CD4-positive, alpha-beta T cell (primary cell): ENCODE measurements at regions of chr1 and their contacts with region 1.

Region 1: GRCh38 chr1:182761396-182762395 is 27.9 kb upstream of the NPL start:
- DNase-seq: no peak
- ATAC-seq: no peak
- H3K4me3 ChIP-seq: no peak overlapping the region
- H3K4me3 Mint-ChIP-seq: no peak overlapping the region
- H3K27ac ChIP-seq: no peak overlapping the region
- H3K27ac Mint-ChIP-seq: no peak overlapping the region
- H3K4me1 ChIP-seq: no peaks in the 10 kb centered on the region
- H3K4me1 Mint-ChIP-seq: no peaks in the 10 kb centered on the region
- H3K27me3 ChIP-seq: peaks cover 0 to 2% of the 10 kb centered on the region in 2 experiments
- H3K27me3 Mint-ChIP-seq: peaks cover 18% of the 10 kb centered on the region
- CTCF ChIP-seq: no peak

Region 2: GRCh38 chr1:182649041-182649440 is 112.7 kb before region 1 on chr1:
- CTCF ChIA-PET with region 1: no interaction called
- POLR2A ChIA-PET with region 1: no interaction called
- intact Hi-C with region 1: loop called in 1 of 2 experiments (anchors 5 kb)
- DNase-seq: no peak
- ATAC-seq: no peak
- H3K4me3 ChIP-seq: no peak overlapping the region
- H3K4me3 Mint-ChIP-seq: no peak overlapping the region
- H3K27ac ChIP-seq: no peak overlapping the region
- H3K27ac Mint-ChIP-seq: no peak overlapping the region
- H3K4me1 ChIP-seq: no peaks in the 10 kb centered on the region
- H3K4me1 Mint-ChIP-seq: no peaks in the 10 kb centered on the region
- H3K27me3 ChIP-seq: no peaks in the 10 kb centered on the region
- H3K27me3 Mint-ChIP-seq: no peaks in the 10 kb centered on the region
- CTCF ChIP-seq: no peak